ENCODE measurements at regions of chr5 and their contacts with region 1.

Region 1: DNA sequence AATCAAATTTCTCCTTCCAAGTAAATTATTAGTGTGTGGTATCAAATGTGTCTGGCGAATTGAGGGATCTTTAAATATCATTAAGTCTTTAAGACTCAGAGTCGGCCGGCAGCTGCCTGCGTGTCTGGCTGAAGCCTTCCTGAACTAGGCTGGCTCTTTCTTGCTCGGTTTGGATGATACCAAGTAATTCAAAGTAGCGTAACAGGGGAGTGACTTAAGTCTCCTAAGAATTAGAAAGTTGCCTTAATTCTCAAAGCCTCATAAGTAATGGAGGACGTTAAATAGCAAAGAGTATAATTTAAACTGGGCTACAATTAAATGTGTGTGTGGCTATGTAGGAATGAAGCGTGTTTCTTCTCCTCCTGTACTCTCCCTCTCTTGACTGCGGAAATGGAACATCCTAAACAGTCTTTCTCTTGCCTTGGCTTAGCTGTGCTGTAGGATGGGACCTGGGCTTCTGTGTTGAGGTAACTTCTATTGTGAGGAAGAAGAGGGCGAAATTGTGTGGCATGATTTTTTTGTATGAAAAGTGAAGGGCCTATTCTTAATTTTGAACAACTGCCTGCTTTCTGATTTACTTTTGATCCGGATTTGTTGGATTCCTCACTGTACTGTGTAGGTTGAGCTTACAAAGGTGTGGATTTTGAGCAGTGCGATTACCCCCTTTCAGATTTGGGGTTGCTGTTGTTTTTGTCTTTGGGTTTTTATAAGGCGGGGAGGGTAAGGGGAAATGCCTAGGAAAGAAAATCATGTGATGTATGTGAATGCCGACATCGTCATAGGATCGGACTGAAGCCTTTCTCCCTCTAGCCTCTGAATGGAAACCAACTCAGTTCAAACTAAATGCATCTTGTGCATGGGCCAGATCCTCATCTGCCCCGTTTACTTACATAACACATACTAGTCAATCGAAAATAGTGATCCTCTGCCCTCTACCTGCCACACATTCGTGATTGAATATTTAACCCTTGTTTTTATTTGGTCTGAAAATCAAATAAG is 29.9 kb downstream of the CPEB4 start:
- DNase-seq: peak; percentile 14 to 89 (median 78)
- ATAC-seq: peak; percentile 92
- H3K4me3 ChIP-seq: peak overlapping the region; percentile 65
- H3K4me3 Mint-ChIP-seq: no peak overlapping the region
- H3K27ac ChIP-seq: peak overlapping the region; percentile 82
- H3K27ac Mint-ChIP-seq: no peak overlapping the region
- H3K4me1 ChIP-seq: peaks cover 4 to 11% of the 10 kb centered on the region in 2 donors
- H3K4me1 Mint-ChIP-seq: peaks cover 0 to 21% (median 6%) of the 10 kb centered on the region in 7 donors
- H3K27me3 ChIP-seq: no peaks in the 10 kb centered on the region
- H3K27me3 Mint-ChIP-seq: no peaks in the 10 kb centered on the region

Region 2: GRCh38 chr5:172984243-172984953 is 933.7 kb before region 1 on chr5:
- CTCF ChIA-PET with region 1: no interaction called
- POLR2A ChIA-PET with region 1: interaction called, 3 read pairs
- intact Hi-C with region 1: loop called in 1 of 2 experiments (anchors 5 kb)
- DNase-seq: peak; percentile 47 to 90 (median 82)
- ATAC-seq: peak; percentile 86
- H3K4me3 ChIP-seq: peak overlapping the region; percentile 64
- H3K4me3 Mint-ChIP-seq: peak overlapping the region; percentile 88 to 99 (median 97)
- H3K27ac ChIP-seq: peak overlapping the region; percentile 92
- H3K27ac Mint-ChIP-seq: peak overlapping the region; percentile 92 to 99 (median 98)
- H3K4me1 ChIP-seq: peaks cover 16 to 26% of the 10 kb centered on the region in 2 donors
- H3K4me1 Mint-ChIP-seq: peaks cover 20 to 71% (median 48%) of the 10 kb centered on the region in 7 donors
- H3K27me3 ChIP-seq: no peaks in the 10 kb centered on the region
- H3K27me3 Mint-ChIP-seq: no peaks in the 10 kb centered on the region

Region 3: GRCh38 chr5:173781814-173782670 is 136.0 kb before region 1 on chr5:
- CTCF ChIA-PET with region 1: no interaction called
- POLR2A ChIA-PET with region 1: no interaction called
- intact Hi-C with region 1: loop called in 1 of 2 experiments (anchors 2 kb)
- DNase-seq: peak; percentile 30 to 65 (median 59)
- ATAC-seq: peak; percentile 89
- H3K4me3 ChIP-seq: no peak overlapping the region
- H3K4me3 Mint-ChIP-seq: peak overlapping the region in 6 of 10 donors; percentile 1 to 46 (median 19)
- H3K27ac ChIP-seq: no peak overlapping the region
- H3K27ac Mint-ChIP-seq: peak overlapping the region; percentile 16 to 84 (median 79)
- H3K4me1 ChIP-seq: peaks cover 4 to 6% of the 10 kb centered on the region in 2 donors
- H3K4me1 Mint-ChIP-seq: peaks cover 7 to 26% (median 15%) of the 10 kb centered on the region in 7 donors
- H3K27me3 ChIP-seq: no peaks in the 10 kb centered on the region
- H3K27me3 Mint-ChIP-seq: peaks cover 0 to under 1% (median 0%) of the 10 kb centered on the region in 5 donors

Region 4: GRCh38 chr5:173941758-173942401 is 23.8 kb after region 1 on chr5:
- CTCF ChIA-PET with region 1: no interaction called
- POLR2A ChIA-PET with region 1: interaction called, 5 read pairs
- intact Hi-C with region 1: loop called in 1 of 2 experiments (anchors 2 kb)
- DNase-seq: no peak
- ATAC-seq: no peak
- H3K4me3 ChIP-seq: no peak overlapping the region
- H3K4me3 Mint-ChIP-seq: no peak overlapping the region
- H3K27ac ChIP-seq: no peak overlapping the region
- H3K27ac Mint-ChIP-seq: peak overlapping the region in 1 of 9 donors; percentile 53
- H3K4me1 ChIP-seq: no peaks in the 10 kb centered on the region
- H3K4me1 Mint-ChIP-seq: peaks cover 0 to 11% (median 4%) of the 10 kb centered on the region in 7 donors
- H3K27me3 ChIP-seq: no peaks in the 10 kb centered on the region
- H3K27me3 Mint-ChIP-seq: no peaks in the 10 kb centered on the region

Region 5: DNA sequence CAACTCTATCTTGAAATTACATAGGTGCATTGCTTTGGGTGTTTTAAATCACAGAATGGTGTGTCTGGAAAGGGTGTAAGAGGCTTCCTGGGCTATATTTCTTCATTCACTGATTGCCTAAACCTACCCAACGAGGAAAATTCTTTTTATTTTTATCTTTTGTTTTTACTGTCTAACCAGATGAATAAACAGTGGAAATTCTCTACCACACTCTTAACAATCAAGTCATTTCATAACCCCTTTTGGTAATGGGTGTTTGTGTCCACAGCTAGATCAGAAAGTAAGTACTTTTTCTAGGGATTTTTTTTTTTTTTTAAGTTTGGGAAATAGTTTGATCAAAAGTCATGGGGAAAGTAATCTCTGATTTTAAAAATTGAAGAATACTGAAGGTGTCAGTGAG is 43.3 kb after region 1 on chr5:
- CTCF ChIA-PET with region 1: no interaction called
- POLR2A ChIA-PET with region 1: interaction called, 6 read pairs
- intact Hi-C with region 1: loop called in 1 of 2 experiments (anchors 1 kb)
- DNase-seq: no peak
- ATAC-seq: no peak
- H3K4me3 ChIP-seq: no peak overlapping the region
- H3K4me3 Mint-ChIP-seq: no peak overlapping the region
- H3K27ac ChIP-seq: no peak overlapping the region
- H3K27ac Mint-ChIP-seq: peak overlapping the region in 4 of 9 donors; percentile 25 to 76 (median 58)
- H3K4me1 ChIP-seq: peaks cover 0 to 24% of the 10 kb centered on the region in 2 donors
- H3K4me1 Mint-ChIP-seq: peaks cover 5 to 36% (median 28%) of the 10 kb centered on the region in 7 donors
- H3K27me3 ChIP-seq: no peaks in the 10 kb centered on the region
- H3K27me3 Mint-ChIP-seq: no peaks in the 10 kb centered on the region

Region 6: DNA sequence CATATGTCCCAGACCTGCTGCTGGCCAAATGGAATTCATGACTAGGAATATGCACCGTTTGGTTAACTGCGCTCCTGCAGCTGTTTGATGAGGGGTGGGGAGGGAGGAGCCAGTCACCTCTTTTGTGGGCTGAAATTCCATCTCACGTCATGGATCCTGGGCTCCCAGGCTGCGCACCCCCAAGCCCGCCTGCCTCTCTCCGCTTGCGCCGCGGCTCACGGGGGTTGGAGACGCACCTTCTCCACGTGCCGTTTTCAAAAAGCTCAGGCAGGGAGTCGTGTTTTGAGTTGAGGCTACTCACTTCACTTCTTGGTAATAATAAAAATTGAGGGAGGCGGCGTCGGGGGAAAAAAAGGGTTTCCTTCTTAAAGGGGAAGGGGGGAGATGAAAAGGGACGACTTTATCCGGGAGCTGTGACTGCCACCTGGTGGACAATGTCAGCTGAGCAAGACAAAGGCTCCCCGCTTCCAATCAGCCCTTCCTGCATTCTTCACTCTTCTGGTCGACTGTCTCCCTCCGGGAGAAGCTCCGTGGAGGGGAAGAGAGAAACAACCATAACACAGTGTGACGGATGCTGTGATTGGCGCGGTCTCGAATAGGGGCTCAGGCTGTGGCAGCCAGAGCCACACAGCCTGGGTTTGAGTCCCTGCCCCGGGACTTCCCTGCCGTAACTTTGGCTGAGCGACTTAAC is 55.0 kb after region 1 on chr5:
- CTCF ChIA-PET with region 1: no interaction called
- POLR2A ChIA-PET with region 1: no interaction called
- intact Hi-C with region 1: loop called (anchors 1 kb)
- DNase-seq: peak; percentile 51 to 76 (median 71)
- ATAC-seq: peak; percentile 91
- H3K4me3 ChIP-seq: peak overlapping the region; percentile 38
- H3K4me3 Mint-ChIP-seq: peak overlapping the region; percentile 70 to 89 (median 84)
- H3K27ac ChIP-seq: no peak overlapping the region
- H3K27ac Mint-ChIP-seq: peak overlapping the region in 5 of 9 donors; percentile 33 to 60 (median 50)
- H3K4me1 ChIP-seq: peaks cover 4 to 6% of the 10 kb centered on the region in 2 donors
- H3K4me1 Mint-ChIP-seq: peaks cover 0 to 13% (median 10%) of the 10 kb centered on the region in 7 donors
- H3K27me3 ChIP-seq: no peaks in the 10 kb centered on the region
- H3K27me3 Mint-ChIP-seq: peaks cover 5 to 33% (median 8%) of the 10 kb centered on the region in 5 donors